ENCODE measurements at regions of chr19 and their contacts with region 1.

Region 1: DNA sequence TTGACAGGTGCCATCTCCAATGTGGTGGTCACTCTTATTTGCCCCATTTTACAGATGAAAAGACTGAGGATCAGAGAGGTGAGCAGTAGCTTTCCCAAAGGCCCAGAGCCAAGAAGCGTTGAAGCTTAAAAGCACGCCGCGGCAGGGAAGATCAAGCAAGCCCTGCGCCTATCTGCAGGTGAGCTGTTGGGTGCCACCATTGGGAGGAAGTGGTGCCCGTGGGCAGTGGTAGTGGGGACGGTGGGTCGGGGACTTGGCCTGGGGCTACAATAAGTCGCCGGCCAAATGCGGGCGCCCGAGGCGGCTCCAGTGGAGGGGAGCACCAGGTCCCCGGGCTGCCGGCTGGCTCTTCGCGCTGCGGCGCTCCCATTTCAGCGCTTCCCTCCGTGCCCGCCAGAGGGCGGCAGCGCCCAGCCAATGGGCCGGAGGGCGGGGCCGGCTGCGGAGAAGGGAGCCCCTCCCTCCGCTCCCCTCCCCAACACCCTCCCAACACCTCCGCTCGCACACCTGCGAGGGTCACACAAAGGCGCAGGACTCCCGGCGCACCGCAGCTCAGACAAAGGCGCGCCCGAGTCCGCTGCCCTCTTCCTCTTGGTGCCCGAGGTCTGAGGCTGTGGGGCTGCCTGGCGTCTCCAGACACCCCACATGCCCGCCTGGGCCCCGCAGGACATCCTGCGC is 744 bp upstream of the POU2F2 start:
- DNase-seq: peak; percentile 81
- ATAC-seq: peak; percentile 74
- H3K4me3 Mint-ChIP-seq: peak overlapping the region; percentile 78
- H3K27ac Mint-ChIP-seq: peak overlapping the region; percentile 79
- H3K4me1 Mint-ChIP-seq: peaks cover 40% of the 10 kb centered on the region
- H3K27me3 Mint-ChIP-seq: no peaks in the 10 kb centered on the region
- CTCF ChIP-seq: peak; percentile 99

Region 2: GRCh38 chr19:42113641-42114348 is 19.2 kb before region 1 on chr19:
- CTCF ChIA-PET with region 1: interaction called, 47 read pairs
- POLR2A ChIA-PET with region 1: interaction called, 3 read pairs
- intact Hi-C with region 1: loop called (anchors 2 kb)
- DNase-seq: peak; percentile 25
- ATAC-seq: peak; percentile 38
- H3K4me3 Mint-ChIP-seq: no peak overlapping the region
- H3K27ac Mint-ChIP-seq: peak overlapping the region; percentile 87
- H3K4me1 Mint-ChIP-seq: peaks cover 48% of the 10 kb centered on the region
- H3K27me3 Mint-ChIP-seq: no peaks in the 10 kb centered on the region
- CTCF ChIP-seq: no peak

Region 3: GRCh38 chr19:42121656-42122069 is 11.3 kb before region 1 on chr19:
- CTCF ChIA-PET with region 1: interaction called, 47 read pairs
- POLR2A ChIA-PET with region 1: interaction called, 22 read pairs
- intact Hi-C with region 1: no loop called
- DNase-seq: peak; percentile 93
- ATAC-seq: peak; percentile 69
- H3K4me3 Mint-ChIP-seq: peak overlapping the region; percentile 78
- H3K27ac Mint-ChIP-seq: peak overlapping the region; percentile 96
- H3K4me1 Mint-ChIP-seq: peaks cover 68% of the 10 kb centered on the region
- H3K27me3 Mint-ChIP-seq: no peaks in the 10 kb centered on the region
- CTCF ChIP-seq: no peak

Measured in activated CD8-positive, alpha-beta T cell treated with anti-CD3 and anti-CD28 coated beads for 36 hours (primary cell).